PC-9 (cell line): ENCODE measurements at regions of chr15 and their contacts with region 1.

Region 1: GRCh38 chr15:65902378-65902777 is 33.1 kb downstream of the RAB11A start:
- DNase-seq: peak; percentile 83 to 94
- H3K4me3 ChIP-seq: no peak overlapping the region
- H3K27ac ChIP-seq: peak overlapping the region; percentile 62
- H3K4me1 ChIP-seq: peaks cover 58% of the 10 kb centered on the region
- H3K27me3 ChIP-seq: no peaks in the 10 kb centered on the region
- CTCF ChIP-seq: no peak

Region 2: GRCh38 chr15:65869127-65869953 is 33.0 kb before region 1 on chr15 and contains the start of gene RAB11A:
- CTCF ChIA-PET with region 1: interaction called, 3 read pairs
- POLR2A ChIA-PET with region 1: interaction called, 3 read pairs
- intact Hi-C with region 1: loop called (anchors 1 kb)
- DNase-seq: peak; percentile 88 to 94
- H3K4me3 ChIP-seq: peak within 1 kb of the TSS; percentile 96
- H3K27ac ChIP-seq: peak within 1 kb of the TSS; percentile 85
- H3K4me1 ChIP-seq: peaks cover 21% of the 10 kb centered on the region; the same call in 1 of the 2 replicates
- H3K27me3 ChIP-seq: no peaks in the 10 kb centered on the region
- CTCF ChIP-seq: no peak; the same call in 1 of the 2 replicates
- total RNA-seq, gene RAB11A: 186 and 233 TPM in 2 replicates

Region 3: DNA sequence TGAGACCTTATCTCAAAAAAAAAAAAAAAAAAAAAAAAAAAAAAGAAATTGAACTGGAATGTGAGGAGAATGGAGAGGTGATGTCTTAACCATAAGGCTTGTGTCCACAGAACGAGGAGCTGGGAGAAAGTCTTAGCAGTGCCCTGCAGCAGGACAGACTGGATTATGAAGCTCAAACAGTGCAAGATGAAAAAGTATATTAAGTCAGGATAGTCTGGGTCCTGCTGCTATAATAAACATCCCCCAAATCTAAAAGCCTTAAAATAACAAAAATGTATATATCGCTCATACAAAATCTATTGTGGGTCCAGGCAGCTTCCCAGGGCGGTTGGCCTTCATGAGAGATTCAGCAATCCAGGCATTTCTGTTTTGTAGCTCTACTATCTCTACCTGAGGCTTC is 142.5 kb after region 1 on chr15:
- CTCF ChIA-PET with region 1: no interaction called
- POLR2A ChIA-PET with region 1: interaction called, 29 read pairs
- intact Hi-C with region 1: no loop called
- DNase-seq: no peak
- H3K4me3 ChIP-seq: no peak overlapping the region
- H3K27ac ChIP-seq: no peak overlapping the region
- H3K4me1 ChIP-seq: no peaks in the 10 kb centered on the region
- H3K27me3 ChIP-seq: no peaks in the 10 kb centered on the region
- CTCF ChIP-seq: no peak

Region 4: DNA sequence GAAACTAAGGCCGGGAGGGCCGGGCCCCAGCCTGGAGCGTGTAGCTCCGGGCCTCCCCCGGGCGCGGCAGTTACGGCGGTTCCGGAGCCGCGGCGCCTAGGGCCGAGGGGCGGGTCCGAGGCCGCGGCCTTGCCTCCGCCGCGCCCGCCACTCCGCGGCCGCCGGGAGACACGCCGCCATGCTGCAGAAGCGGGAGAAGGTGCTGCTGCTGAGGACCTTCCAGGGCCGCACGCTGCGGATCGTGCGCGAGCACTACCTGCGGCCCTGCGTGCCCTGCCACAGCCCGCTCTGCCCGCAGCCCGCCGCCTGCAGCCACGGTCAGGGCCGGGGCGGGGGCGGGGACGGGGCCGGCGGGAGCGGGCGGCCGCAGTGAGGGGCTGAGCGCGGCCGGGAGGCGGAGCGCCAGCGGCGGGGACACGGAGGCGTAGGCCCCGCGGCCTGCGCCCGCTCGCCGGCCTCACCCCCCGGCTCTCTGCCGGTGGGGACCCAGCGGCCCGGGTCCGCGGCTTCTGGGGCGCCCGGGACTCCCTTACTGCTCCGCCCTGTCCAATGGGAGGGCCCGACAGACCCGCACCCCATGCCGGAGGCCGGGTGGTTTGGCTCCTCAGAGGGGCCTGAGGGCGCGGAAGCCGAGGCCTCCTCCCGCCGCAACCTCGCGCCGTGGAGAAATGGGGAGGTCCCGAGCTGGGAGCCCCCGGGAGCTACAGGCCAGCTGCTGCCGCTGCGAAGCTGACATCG is 391.2 kb after region 1 on chr15 and contains the start of gene DIS3L:
- CTCF ChIA-PET with region 1: no interaction called
- POLR2A ChIA-PET with region 1: no interaction called
- intact Hi-C with region 1: loop called (anchors 5 kb)
- DNase-seq: peak in 1 of 2 experiments; percentile 52
- H3K4me3 ChIP-seq: peak within 1 kb of the TSS; percentile 52
- H3K27ac ChIP-seq: peak within 1 kb of the TSS; percentile 57
- H3K4me1 ChIP-seq: peaks cover 28% of the 10 kb centered on the region
- H3K27me3 ChIP-seq: no peaks in the 10 kb centered on the region
- CTCF ChIP-seq: no peak
- total RNA-seq, gene DIS3L: 27.7 and 31.2 TPM in 2 replicates

Region 5: DNA sequence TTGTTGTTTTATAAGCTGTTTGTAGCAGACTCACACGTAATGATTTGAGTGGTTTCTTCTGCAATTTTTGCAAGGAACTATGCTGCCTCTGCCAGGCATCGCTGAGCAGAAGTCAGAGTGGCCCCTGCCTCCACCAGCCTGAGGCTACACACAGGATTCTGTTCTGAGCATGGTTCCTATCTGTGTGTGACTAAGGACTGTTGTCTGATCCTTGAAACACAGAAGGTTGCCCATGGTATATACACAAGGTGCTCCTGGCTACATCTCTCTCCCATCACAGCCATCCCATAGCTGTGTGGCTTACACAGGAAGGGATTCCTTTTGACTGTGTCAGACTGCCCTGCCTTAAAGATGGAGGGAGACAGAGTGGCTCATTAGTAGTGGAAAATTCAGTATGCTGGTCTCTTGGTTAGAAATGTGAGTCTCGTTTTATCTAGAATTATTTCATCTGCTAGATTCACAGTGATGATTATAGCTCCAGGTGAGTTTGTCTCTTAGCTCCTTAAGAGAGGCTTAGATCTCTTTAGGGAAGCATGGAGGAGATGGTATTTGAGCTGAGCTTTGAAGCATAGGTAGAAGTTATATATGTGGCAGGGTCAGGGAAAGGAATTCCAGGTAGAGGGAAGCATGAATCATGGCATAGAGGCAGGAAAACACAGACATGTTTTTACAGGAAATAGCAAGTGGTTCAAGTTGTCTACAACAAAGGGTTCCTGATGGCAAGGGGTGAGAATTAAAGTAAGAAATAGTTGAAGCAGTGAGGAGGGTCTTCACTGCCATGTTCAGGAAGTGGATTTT is 557.6 kb after region 1 on chr15:
- CTCF ChIA-PET with region 1: interaction called, 12 read pairs
- POLR2A ChIA-PET with region 1: no interaction called
- intact Hi-C with region 1: no loop called
- DNase-seq: peak; percentile 49 to 73
- H3K4me3 ChIP-seq: no peak overlapping the region
- H3K27ac ChIP-seq: peak overlapping the region; percentile 93
- H3K4me1 ChIP-seq: peaks cover 59% of the 10 kb centered on the region
- H3K27me3 ChIP-seq: no peaks in the 10 kb centered on the region
- CTCF ChIP-seq: no peak

Region 6: GRCh38 chr15:66504563-66505429 is 602.4 kb after region 1 on chr15 and contains the starts of genes RPL4 and ZWILCH:
- CTCF ChIA-PET with region 1: no interaction called
- POLR2A ChIA-PET with region 1: no interaction called
- intact Hi-C with region 1: loop called (anchors 10 kb)
- DNase-seq: peak; percentile 59 to 84
- H3K4me3 ChIP-seq: peak within 1 kb of the TSS; percentile 100
- H3K27ac ChIP-seq: peak within 1 kb of the TSS; percentile 91
- H3K4me1 ChIP-seq: peaks cover 11% of the 10 kb centered on the region
- H3K27me3 ChIP-seq: no peaks in the 10 kb centered on the region
- CTCF ChIP-seq: no peak
- total RNA-seq, gene RPL4: 1,859 and 2,320 TPM in 2 replicates
- total RNA-seq, gene ZWILCH: 26.3 and 30.3 TPM in 2 replicates